Naive thymus-derived CD4-positive, alpha-beta T cell (primary cell): ENCODE measurements at regions of chr17 and their contacts with region 1.

Region 1: GRCh38 chr17:1365445-1366039 is 34.5 kb downstream of the YWHAE start:
- DNase-seq: peak in 8 of 9 donors; percentile 37 to 81 (median 74)
- ATAC-seq: peak; percentile 86
- H3K4me3 ChIP-seq: no peak overlapping the region
- H3K4me3 Mint-ChIP-seq: peak overlapping the region in 7 of 10 donors; percentile 2 to 48 (median 41)
- H3K27ac ChIP-seq: peak overlapping the region; percentile 48
- H3K27ac Mint-ChIP-seq: peak overlapping the region in 6 of 9 donors; percentile 35 to 86 (median 74)
- H3K4me1 ChIP-seq: peaks cover 25 to 27% of the 10 kb centered on the region in 2 donors
- H3K4me1 Mint-ChIP-seq: peaks cover 39 to 83% (median 64%) of the 10 kb centered on the region in 7 donors
- H3K27me3 ChIP-seq: no peaks in the 10 kb centered on the region
- H3K27me3 Mint-ChIP-seq: no peaks in the 10 kb centered on the region

Region 2: DNA sequence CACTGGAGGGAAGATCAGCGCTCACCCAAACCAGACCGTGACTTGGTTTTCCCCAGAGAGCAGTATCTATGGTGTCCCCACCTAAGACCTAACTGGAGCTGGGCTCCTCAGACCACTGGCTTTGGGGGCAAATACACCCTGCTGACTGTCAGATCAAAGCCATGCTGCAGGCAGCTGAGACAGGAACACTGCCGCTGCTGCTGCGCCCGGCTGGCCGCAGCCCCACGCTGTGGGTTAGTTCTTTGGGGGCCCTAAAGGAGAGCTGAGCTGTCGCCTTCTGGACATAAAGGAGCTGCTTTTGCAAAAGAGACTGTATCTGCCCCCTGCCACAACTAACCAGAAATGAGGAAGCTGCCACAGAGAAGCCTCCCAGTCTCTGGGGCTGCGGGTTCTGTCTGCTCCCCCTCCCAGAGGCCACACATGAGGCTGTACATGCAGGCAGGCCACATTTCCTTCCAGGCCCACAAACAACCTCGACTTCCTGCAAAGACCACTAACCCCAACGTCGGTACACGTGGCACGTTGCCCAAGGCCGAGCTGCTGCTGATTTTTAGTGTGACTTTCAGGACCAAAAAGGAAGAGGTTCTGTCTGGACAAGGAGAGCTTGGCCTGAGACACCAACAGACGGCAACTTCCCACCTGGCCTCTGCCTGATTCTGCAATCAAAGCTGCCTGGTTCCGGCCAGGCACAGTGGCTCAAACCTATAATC is 167.6 kb before region 1 on chr17:
- CTCF ChIA-PET with region 1: no interaction called
- POLR2A ChIA-PET with region 1: no interaction called
- intact Hi-C with region 1: no loop called
- DNase-seq: peak in 8 of 9 donors; percentile 34 to 51 (median 42)
- ATAC-seq: peak; percentile 85
- H3K4me3 ChIP-seq: peak overlapping the region; percentile 25
- H3K4me3 Mint-ChIP-seq: peak overlapping the region; percentile 25 to 65 (median 58)
- H3K27ac ChIP-seq: no peak overlapping the region
- H3K27ac Mint-ChIP-seq: peak overlapping the region; percentile 28 to 87 (median 46)
- H3K4me1 ChIP-seq: peaks cover 26 to 57% of the 10 kb centered on the region in 2 donors
- H3K4me1 Mint-ChIP-seq: peaks cover 34 to 56% (median 46%) of the 10 kb centered on the region in 7 donors
- H3K27me3 ChIP-seq: no peaks in the 10 kb centered on the region
- H3K27me3 Mint-ChIP-seq: no peaks in the 10 kb centered on the region

Region 3: DNA sequence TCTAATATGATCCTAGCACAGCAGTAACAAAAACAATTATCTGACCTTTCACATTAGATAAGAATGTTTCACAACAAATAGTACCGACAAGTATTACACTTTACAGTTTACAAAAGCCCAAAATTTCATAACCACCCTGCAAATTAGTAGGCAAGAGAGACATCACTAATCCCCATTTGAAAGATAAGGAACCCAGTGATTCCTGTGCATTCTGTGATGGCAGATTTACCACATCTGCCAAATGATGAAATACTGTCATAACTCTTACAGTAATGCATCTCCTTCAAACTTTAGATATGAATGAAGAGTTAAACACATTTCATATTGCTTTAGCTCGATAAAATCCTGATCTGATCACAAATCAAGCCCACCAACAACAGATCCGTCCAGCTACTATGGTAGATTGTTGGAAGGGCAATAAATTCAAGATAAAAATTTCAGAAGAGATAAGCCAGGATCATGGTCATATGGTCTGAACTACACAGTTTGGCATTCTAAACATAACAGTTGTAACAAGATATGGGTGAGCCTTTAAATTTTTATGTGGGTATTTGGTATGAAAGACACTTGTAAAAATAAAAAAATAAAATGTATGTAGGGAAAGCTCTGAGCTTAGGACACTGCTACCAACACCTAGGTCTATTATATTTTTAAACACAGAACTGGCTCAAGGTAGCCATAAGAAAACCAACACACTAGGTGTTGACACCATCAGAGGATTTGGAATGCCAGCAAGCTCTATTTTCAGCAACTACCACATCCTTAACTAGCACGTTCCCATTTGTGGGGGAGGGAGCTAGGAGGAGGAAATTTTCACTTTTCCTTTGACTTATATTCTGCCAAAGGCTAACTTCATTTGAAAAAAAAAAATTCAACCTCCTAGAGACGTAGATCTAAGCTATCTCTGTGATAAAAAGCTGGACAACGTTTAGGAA is 25.2 kb after region 1 on chr17:
- CTCF ChIA-PET with region 1: interaction called, 18 read pairs
- POLR2A ChIA-PET with region 1: interaction called, 3 read pairs
- intact Hi-C with region 1: no loop called
- DNase-seq: no peak
- ATAC-seq: peak; percentile 48
- H3K4me3 ChIP-seq: no peak overlapping the region
- H3K4me3 Mint-ChIP-seq: peak overlapping the region; percentile 1 to 73 (median 28)
- H3K27ac ChIP-seq: peak overlapping the region; percentile 6
- H3K27ac Mint-ChIP-seq: peak overlapping the region; percentile 32 to 69 (median 50)
- H3K4me1 ChIP-seq: peaks cover 56 to 78% of the 10 kb centered on the region in 2 donors
- H3K4me1 Mint-ChIP-seq: peaks cover 48 to 95% (median 68%) of the 10 kb centered on the region in 7 donors
- H3K27me3 ChIP-seq: no peaks in the 10 kb centered on the region
- H3K27me3 Mint-ChIP-seq: no peaks in the 10 kb centered on the region

Region 4: GRCh38 chr17:1455797-1456599 is 90.5 kb after region 1 on chr17 and contains the start of gene CRK:
- CTCF ChIA-PET with region 1: interaction called, 3 read pairs
- POLR2A ChIA-PET with region 1: interaction called, 3 read pairs
- intact Hi-C with region 1: loop called (anchors 1 kb)
- DNase-seq: peak; percentile 97 to 100 (median 99)
- ATAC-seq: peak; percentile 97
- H3K4me3 ChIP-seq: peak within 1 kb of the TSS; percentile 94
- H3K4me3 Mint-ChIP-seq: peak within 1 kb of the TSS; percentile 86 to 95 (median 90)
- H3K27ac ChIP-seq: peak within 1 kb of the TSS; percentile 97
- H3K27ac Mint-ChIP-seq: peak within 1 kb of the TSS; percentile 63 to 92 (median 86)
- H3K4me1 ChIP-seq: peaks cover 18 to 37% of the 10 kb centered on the region in 2 donors
- H3K4me1 Mint-ChIP-seq: peaks cover 28 to 64% (median 48%) of the 10 kb centered on the region in 7 donors
- H3K27me3 ChIP-seq: no peaks in the 10 kb centered on the region
- H3K27me3 Mint-ChIP-seq: peaks cover 0 to 23% (median 4%) of the 10 kb centered on the region in 5 donors
- total RNA-seq, gene CRK: 16.9 to 29.0 (median 20.9) TPM

Region 5: DNA sequence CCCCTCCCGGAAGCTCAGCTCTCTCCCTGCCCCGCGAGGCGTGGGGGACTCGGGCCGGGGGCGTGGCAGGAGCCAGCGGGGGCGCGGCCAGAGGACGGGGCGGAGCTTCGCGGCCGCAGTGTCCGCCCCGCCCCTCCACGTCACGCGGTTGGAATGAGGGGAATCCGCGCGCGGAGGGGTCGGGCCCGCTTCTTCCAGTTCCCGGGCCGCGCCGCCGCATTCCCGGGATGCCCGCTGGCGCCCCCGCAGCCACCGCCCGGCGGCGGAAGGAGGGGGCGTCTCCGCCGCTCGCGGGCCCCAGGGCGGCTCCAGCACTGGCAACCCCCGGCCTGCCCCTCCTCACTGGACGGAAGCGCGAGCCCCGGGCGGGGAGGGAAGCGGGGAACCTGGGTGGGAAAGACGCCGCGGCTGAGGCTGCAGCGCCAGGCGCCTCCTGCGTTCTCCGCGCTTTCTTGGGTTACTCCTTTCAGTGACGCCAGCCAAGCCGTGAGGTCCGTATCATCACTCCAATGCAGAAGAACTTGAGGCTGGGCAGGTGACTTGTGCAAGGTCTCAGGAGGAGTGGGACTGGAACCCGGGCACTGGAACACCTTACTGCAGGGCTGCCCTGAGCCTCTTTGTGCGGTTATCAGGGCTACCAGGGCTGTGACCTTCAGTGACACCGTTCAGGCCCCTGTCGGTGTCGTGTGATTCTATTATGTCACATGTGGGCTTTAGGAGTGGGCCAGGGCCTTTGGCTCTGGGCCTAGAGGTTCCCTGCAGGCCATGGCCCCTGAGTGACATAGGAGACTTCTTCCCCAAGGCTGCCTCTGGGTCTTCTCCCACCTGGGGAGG is 122.7 kb after region 1 on chr17:
- CTCF ChIA-PET with region 1: no interaction called
- POLR2A ChIA-PET with region 1: no interaction called
- intact Hi-C with region 1: loop called in 1 of 2 experiments (anchors 1 kb)
- DNase-seq: peak; percentile 40 to 83 (median 61)
- ATAC-seq: peak; percentile 61
- H3K4me3 ChIP-seq: peak overlapping the region; percentile 65
- H3K4me3 Mint-ChIP-seq: peak overlapping the region; percentile 82 to 95 (median 88)
- H3K27ac ChIP-seq: peak overlapping the region; percentile 78
- H3K27ac Mint-ChIP-seq: peak overlapping the region; percentile 49 to 92 (median 71)
- H3K4me1 ChIP-seq: peaks cover 21 to 47% of the 10 kb centered on the region in 2 donors
- H3K4me1 Mint-ChIP-seq: peaks cover 0 to 58% (median 44%) of the 10 kb centered on the region in 7 donors
- H3K27me3 ChIP-seq: no peaks in the 10 kb centered on the region
- H3K27me3 Mint-ChIP-seq: peaks cover 0 to 4% (median 0%) of the 10 kb centered on the region in 5 donors

Region 6: GRCh38 chr17:1561400-1562175 is 196.0 kb after region 1 on chr17:
- CTCF ChIA-PET with region 1: interaction called, 4 read pairs
- POLR2A ChIA-PET with region 1: interaction called, 4 read pairs
- intact Hi-C with region 1: loop called in 1 of 2 experiments (anchors 1 kb)
- DNase-seq: peak in 8 of 9 donors; percentile 28 to 58 (median 36)
- ATAC-seq: peak; percentile 37
- H3K4me3 ChIP-seq: peak overlapping the region; percentile 39
- H3K4me3 Mint-ChIP-seq: peak overlapping the region; percentile 73 to 89 (median 82)
- H3K27ac ChIP-seq: peak overlapping the region; percentile 76
- H3K27ac Mint-ChIP-seq: peak overlapping the region in 8 of 9 donors; percentile 54 to 90 (median 76)
- H3K4me1 ChIP-seq: peaks cover 9 to 12% of the 10 kb centered on the region in 2 donors
- H3K4me1 Mint-ChIP-seq: peaks cover 25 to 54% (median 43%) of the 10 kb centered on the region in 7 donors
- H3K27me3 ChIP-seq: no peaks in the 10 kb centered on the region
- H3K27me3 Mint-ChIP-seq: peaks cover 0 to 13% (median 0%) of the 10 kb centered on the region in 5 donors